Endothelial cell of umbilical vein (primary cell): ENCODE measurements at regions of chr10 and their contacts with region 1.

Region 1: DNA sequence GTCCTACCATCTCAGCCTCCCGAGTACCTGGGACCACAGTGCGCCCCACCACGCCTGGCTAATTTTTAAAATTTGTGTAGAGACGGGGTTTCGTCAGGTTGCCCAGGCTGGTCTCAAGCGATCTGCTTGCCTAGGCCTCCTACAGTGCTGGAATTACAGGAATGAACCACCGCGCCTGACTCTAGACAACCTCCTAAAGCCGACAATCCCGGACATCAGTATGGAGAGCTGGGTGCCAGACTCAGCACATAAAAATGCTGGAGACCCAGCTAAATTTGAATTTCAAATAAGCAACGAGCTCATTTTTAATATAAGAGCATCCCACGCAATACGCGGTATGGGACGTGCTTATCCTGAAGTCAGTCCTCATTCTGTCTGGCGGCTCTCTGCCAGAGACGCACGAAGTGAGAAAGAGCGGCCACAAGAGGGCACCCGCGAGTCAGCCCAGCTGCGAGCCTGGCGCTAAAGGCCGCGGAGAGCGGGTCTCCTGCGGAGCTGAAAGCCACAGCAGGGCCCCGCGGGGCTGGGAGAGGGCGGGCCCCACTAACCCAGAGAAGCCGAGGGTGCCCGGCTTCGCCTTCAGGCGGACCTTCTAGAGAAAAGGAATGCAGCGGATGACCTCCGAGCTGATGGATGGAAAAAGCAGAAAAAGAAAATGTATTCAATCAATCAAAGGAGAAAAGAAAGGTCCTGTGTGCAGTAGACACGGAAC is 7.0 kb downstream of the CALY start:
- DNase-seq: peak; percentile 77
- H3K4me3 ChIP-seq: no peak overlapping the region
- H3K27ac ChIP-seq: no peak overlapping the region
- H3K4me1 ChIP-seq: peaks cover 2% of the 10 kb centered on the region
- H3K27me3 ChIP-seq: peaks cover 39 to 55% of the 10 kb centered on the region in 2 experiments
- CTCF ChIP-seq: peak; percentile 93 to 96
- POLR2A ChIP-seq: no peak

Region 2: GRCh38 chr10:133100706-133101415 is 228.8 kb before region 1 on chr10:
- CTCF ChIA-PET with region 1: no interaction called
- POLR2A ChIA-PET with region 1: no interaction called
- dilution Hi-C with region 1: no loop called
- intact Hi-C with region 1: no loop called
- DNase-seq: no peak
- H3K4me3 ChIP-seq: no peak overlapping the region
- H3K27ac ChIP-seq: no peak overlapping the region
- H3K4me1 ChIP-seq: no peaks in the 10 kb centered on the region
- H3K27me3 ChIP-seq: no peaks in the 10 kb centered on the region
- CTCF ChIP-seq: no peak
- POLR2A ChIP-seq: no peak

Region 3: DNA sequence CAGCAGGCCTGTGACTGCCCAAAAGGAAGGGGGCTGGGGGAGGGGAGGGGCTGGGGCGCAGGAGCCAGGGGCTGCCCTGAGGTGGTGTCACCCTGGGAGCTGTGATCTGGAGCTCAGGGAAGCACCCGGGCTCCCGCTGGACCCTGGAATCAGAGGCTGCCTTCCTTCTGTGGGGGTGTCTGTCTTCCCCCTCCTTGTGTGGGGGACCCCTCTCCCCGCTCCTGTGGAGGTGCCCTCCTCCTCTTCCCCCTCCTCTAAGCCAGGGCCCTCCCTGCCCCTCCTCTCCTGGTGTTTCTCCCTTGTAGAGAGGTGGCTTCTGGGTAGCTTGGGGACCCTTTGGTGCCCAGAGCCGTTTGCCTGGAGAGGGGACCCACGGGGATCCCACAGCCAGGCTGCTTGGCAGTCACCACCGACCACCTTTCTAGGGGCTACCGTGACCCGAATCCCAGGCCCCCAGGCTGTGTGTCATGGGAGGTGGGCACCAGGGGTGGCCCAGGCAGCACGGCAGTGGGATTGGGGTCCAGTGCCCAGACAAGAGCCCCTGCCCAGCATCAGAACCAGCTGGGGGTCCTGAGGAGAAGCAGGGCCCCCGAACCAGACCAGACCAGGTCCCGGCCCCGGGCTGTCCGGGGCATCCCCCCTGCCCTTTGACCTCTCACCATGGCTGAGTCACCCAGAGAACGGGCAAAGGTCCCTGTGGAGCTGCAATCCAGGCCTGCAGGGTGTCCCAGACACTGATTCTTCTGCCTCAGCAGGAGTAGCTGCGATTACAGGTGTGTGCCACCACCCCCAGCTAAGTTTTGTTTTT is 18.3 kb after region 1 on chr10:
- CTCF ChIA-PET with region 1: interaction called, 20 read pairs
- POLR2A ChIA-PET with region 1: no interaction called
- dilution Hi-C with region 1: no loop called
- intact Hi-C with region 1: no loop called
- DNase-seq: no peak
- H3K4me3 ChIP-seq: no peak overlapping the region
- H3K27ac ChIP-seq: no peak overlapping the region
- H3K4me1 ChIP-seq: no peaks in the 10 kb centered on the region
- H3K27me3 ChIP-seq: no peaks in the 10 kb centered on the region
- CTCF ChIP-seq: no peak
- POLR2A ChIP-seq: no peak

Region 4: GRCh38 chr10:133373104-133373624 is 43.5 kb after region 1 on chr10 and contains the start of gene ECHS1:
- CTCF ChIA-PET with region 1: interaction called, 6 read pairs
- POLR2A ChIA-PET with region 1: no interaction called
- dilution Hi-C with region 1: no loop called
- intact Hi-C with region 1: loop called (anchors 2 kb)
- DNase-seq: peak; percentile 93
- H3K4me3 ChIP-seq: peak within 1 kb of the TSS; percentile 53 to 100 (median 69)
- H3K27ac ChIP-seq: peak within 1 kb of the TSS; percentile 74
- H3K4me1 ChIP-seq: peaks cover 9% of the 10 kb centered on the region
- H3K27me3 ChIP-seq: no peaks in the 10 kb centered on the region
- CTCF ChIP-seq: no peak
- POLR2A ChIP-seq: peak; percentile 91
- total RNA-seq, gene ECHS1: 91.9 and 108 TPM in 2 replicates

Region 5: GRCh38 chr10:133438711-133439273 is 109.1 kb after region 1 on chr10:
- CTCF ChIA-PET with region 1: interaction called, 3 read pairs
- POLR2A ChIA-PET with region 1: no interaction called
- dilution Hi-C with region 1: no loop called
- intact Hi-C with region 1: loop called (anchors 5 kb)
- DNase-seq: peak; percentile 19
- H3K4me3 ChIP-seq: no peak overlapping the region
- H3K27ac ChIP-seq: no peak overlapping the region
- H3K4me1 ChIP-seq: no peaks in the 10 kb centered on the region
- H3K27me3 ChIP-seq: no peaks in the 10 kb centered on the region
- CTCF ChIP-seq: peak; percentile 13 to 15
- POLR2A ChIP-seq: no peak